Naive thymus-derived CD8-positive, alpha-beta T cell (primary cell): ENCODE measurements at regions of chr2 and their contacts with region 1.

Region 1: GRCh38 chr2:54558188-54559005 is 102.3 kb downstream of the SPTBN1 start:
- DNase-seq: peak; percentile 49 to 82 (median 62)
- ATAC-seq: peak; percentile 62 to 71
- H3K4me3 Mint-ChIP-seq: peak overlapping the region; percentile 94 to 100 (median 98)
- H3K27ac Mint-ChIP-seq: peak overlapping the region; percentile 91 to 98 (median 96)
- H3K4me1 Mint-ChIP-seq: peaks cover 41 to 70% (median 58%) of the 10 kb centered on the region in 4 donors
- H3K27me3 Mint-ChIP-seq: no peaks in the 10 kb centered on the region

Region 2: DNA sequence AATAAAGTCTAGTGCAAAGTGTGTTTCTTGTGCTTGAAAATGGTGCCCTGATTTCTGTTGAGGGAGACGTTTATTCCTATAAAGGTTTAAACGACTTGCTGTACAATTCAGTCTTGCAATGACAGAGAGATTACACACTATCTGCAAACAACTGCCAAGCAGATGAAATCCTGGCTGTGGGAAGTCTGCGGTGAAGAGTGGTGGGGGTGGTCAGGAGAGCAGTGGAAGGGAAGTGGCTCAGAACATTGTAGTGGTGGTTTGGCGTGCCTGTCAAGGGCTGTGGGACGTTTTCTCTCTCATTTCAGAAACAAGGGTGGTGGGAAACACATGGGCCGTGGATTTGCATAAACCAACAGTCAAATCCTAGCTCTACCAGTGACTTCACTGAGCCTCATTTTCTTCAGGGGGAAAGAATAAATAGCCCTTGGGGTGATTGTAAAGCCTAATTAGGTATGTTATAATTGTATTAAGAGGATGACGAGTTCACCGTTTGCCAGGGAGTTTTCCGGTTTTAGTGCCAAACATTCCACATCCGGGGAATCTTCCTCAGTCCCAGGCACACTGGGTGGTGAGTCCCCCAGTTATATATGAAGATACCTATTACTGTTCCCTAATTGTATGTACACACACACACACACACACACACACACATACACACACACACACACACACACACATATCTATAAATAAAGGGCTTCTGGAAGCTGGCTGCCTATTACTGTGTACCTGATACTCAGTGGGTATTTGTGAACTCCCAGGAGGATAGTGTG is 12.7 kb after region 1 on chr2:
- POLR2A ChIA-PET with region 1: interaction called, 331 read pairs
- DNase-seq: peak; percentile 39 to 82 (median 70)
- ATAC-seq: peak; percentile 14 to 30
- H3K4me3 Mint-ChIP-seq: peak overlapping the region; percentile 71 to 93 (median 84)
- H3K27ac Mint-ChIP-seq: peak overlapping the region; percentile 94 to 99 (median 98)
- H3K4me1 Mint-ChIP-seq: peaks cover 48 to 96% (median 92%) of the 10 kb centered on the region in 4 donors
- H3K27me3 Mint-ChIP-seq: no peaks in the 10 kb centered on the region

Region 3: DNA sequence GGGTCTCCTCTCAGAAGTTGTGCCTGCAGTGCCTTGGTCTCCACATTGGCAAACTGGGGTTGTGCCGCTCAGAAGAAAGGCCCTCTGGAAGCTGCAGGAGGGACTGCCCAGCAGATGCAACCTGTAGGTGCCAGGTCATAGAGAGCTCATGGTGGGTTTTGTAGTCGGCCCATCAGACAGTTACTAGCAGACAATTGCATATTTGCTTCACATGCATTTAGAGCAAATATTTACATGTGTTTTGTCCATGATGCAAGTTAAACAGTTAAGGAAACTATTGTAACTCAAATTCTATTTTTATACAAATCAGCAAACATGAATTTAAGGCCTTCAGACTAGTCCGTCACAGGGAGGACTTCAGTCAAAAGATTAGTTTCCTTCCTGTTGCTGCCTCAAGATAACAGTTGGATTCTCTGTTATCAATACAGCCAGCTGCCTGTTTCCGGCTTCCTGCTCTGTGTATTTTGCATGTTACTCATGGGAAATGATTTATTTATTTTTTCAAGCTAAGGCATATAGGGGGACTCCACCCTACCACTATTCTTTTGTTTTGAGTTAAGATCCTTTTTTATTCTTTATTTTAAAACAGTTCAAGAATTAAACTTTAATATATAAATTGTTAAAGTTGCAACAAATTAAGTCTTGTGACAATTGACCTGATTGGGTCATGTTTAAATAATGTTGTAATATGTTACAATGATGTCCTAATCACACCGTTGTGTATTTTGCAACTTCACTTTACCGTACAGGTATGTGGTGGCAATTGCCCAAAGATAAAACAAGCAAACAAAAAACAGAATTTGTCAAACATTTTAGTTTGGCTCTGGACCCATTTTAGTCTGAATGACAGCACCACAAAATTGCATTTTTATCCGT is 31.2 kb after region 1 on chr2:
- POLR2A ChIA-PET with region 1: interaction called, 58 read pairs
- DNase-seq: peak in 6 of 10 donors; percentile 33 to 58 (median 45)
- ATAC-seq: peak; percentile 62 to 66
- H3K4me3 Mint-ChIP-seq: peak overlapping the region; percentile 53 to 86 (median 74)
- H3K27ac Mint-ChIP-seq: peak overlapping the region; percentile 86 to 99 (median 94)
- H3K4me1 Mint-ChIP-seq: peaks cover 54 to 96% (median 92%) of the 10 kb centered on the region in 4 donors
- H3K27me3 Mint-ChIP-seq: no peaks in the 10 kb centered on the region

Region 4: GRCh38 chr2:54597153-54597848 is 38.9 kb after region 1 on chr2:
- POLR2A ChIA-PET with region 1: interaction called, 58 read pairs
- DNase-seq: peak in 1 of 10 donors; percentile 13
- ATAC-seq: peak; percentile 39 to 41
- H3K4me3 Mint-ChIP-seq: peak overlapping the region; percentile 66 to 91 (median 86)
- H3K27ac Mint-ChIP-seq: peak overlapping the region; percentile 95 to 99 (median 98)
- H3K4me1 Mint-ChIP-seq: peaks cover 53 to 99% (median 96%) of the 10 kb centered on the region in 4 donors
- H3K27me3 Mint-ChIP-seq: no peaks in the 10 kb centered on the region

Region 5: DNA sequence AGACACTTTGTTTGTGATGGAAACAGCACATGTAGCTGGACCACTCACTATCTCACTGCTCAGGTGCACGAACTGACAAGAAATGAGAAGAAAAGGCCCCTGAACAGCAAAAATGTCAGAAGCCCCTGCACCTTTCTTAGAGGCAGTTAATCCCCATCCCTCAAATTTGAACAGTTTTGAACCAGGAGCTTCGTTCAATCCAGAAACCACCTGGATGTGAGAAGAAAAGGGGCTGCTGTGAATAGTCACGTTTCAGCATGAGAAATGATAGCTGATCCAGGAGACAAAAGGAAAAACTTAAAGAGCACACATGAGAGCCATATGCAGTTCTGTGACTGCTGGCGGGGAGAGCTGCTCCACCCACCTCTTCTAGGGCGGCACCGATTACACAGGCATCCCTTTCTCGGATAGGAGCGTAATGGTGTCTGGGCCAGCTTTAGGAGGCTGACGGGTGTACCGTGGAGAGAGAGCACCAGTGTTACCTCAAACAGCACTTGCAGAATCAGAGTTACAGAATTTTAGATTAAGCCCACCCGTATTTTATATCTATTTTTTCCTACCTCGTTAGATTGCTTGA is 48.1 kb after region 1 on chr2:
- POLR2A ChIA-PET with region 1: interaction called, 32 read pairs
- DNase-seq: peak in 6 of 10 donors; percentile 22 to 51 (median 34)
- ATAC-seq: peak; percentile 78 to 83
- H3K4me3 Mint-ChIP-seq: peak overlapping the region; percentile 13 to 82 (median 67)
- H3K27ac Mint-ChIP-seq: peak overlapping the region; percentile 84 to 98 (median 89)
- H3K4me1 Mint-ChIP-seq: peaks cover 72 to 91% (median 87%) of the 10 kb centered on the region in 4 donors
- H3K27me3 Mint-ChIP-seq: no peaks in the 10 kb centered on the region

Region 6: GRCh38 chr2:54618646-54619565 is 60.5 kb after region 1 on chr2:
- POLR2A ChIA-PET with region 1: interaction called, 24 read pairs
- DNase-seq: no peak
- ATAC-seq: peak; percentile 44 to 46
- H3K4me3 Mint-ChIP-seq: peak overlapping the region in 8 of 10 donors; percentile 8 to 59 (median 48)
- H3K27ac Mint-ChIP-seq: peak overlapping the region; percentile 36 to 94 (median 84)
- H3K4me1 Mint-ChIP-seq: peaks cover 19 to 52% (median 34%) of the 10 kb centered on the region in 4 donors
- H3K27me3 Mint-ChIP-seq: no peaks in the 10 kb centered on the region

Region 7: GRCh38 chr2:54657664-54658083 is 99.3 kb after region 1 on chr2:
- POLR2A ChIA-PET with region 1: no interaction called
- DNase-seq: peak in 2 of 10 donors; percentile 14 to 20
- ATAC-seq: peak; percentile 35 to 44
- H3K4me3 Mint-ChIP-seq: no peak overlapping the region
- H3K27ac Mint-ChIP-seq: peak overlapping the region in 7 of 10 donors; percentile 19 to 84 (median 76)
- H3K4me1 Mint-ChIP-seq: peaks cover 0 to 6% (median 1%) of the 10 kb centered on the region in 4 donors
- H3K27me3 Mint-ChIP-seq: no peaks in the 10 kb centered on the region